GM18951 (cell line): ENCODE measurements at regions of chr13 and their contacts with region 1.

Region 1: GRCh38 chr13:40982772-40983171 is 36.3 kb downstream of the ELF1 start:
- POLR2A ChIP-seq: peak; percentile 17

Region 2: GRCh38 chr13:40401911-40402776 is 580.6 kb before region 1 on chr13:
- in situ Hi-C with region 1: no loop called
- POLR2A ChIP-seq: no peak

Region 3: GRCh38 chr13:41054212-41054877 is 71.6 kb after region 1 on chr13:
- in situ Hi-C with region 1: loop called (anchors 10 kb)
- POLR2A ChIP-seq: no peak